ENCODE measurements at regions of chr16 and their contacts with region 1.

Region 1: GRCh38 chr16:80540516-80541272 is at the start of gene DYNLRB2:
- DNase-seq: peak; percentile 82
- H3K4me3 ChIP-seq: peak within 1 kb of the TSS; percentile 63
- H3K27ac ChIP-seq: no peak within 1 kb of the TSS
- H3K4me1 ChIP-seq: peaks cover 3% of the 10 kb centered on the region
- CTCF ChIP-seq: no peak
- total RNA-seq, gene DYNLRB2: not detected in 2 replicates

Region 2: GRCh38 chr16:80488167-80488566 is 52.5 kb before region 1 on chr16:
- CTCF ChIA-PET with region 1: no interaction called
- POLR2A ChIA-PET with region 1: no interaction called
- intact Hi-C with region 1: no loop called
- DNase-seq: no peak
- H3K4me3 ChIP-seq: no peak overlapping the region
- H3K27ac ChIP-seq: no peak overlapping the region
- H3K4me1 ChIP-seq: no peaks in the 10 kb centered on the region
- CTCF ChIP-seq: no peak

Region 3: GRCh38 chr16:80557037-80557436 is 16.3 kb after region 1 on chr16:
- CTCF ChIA-PET with region 1: no interaction called
- POLR2A ChIA-PET with region 1: no interaction called
- intact Hi-C with region 1: no loop called
- DNase-seq: no peak
- H3K4me3 ChIP-seq: no peak overlapping the region
- H3K27ac ChIP-seq: no peak overlapping the region
- H3K4me1 ChIP-seq: no peaks in the 10 kb centered on the region
- CTCF ChIP-seq: no peak

Region 4: GRCh38 chr16:80599466-80599865 is 58.8 kb after region 1 on chr16:
- CTCF ChIA-PET with region 1: no interaction called
- POLR2A ChIA-PET with region 1: no interaction called
- intact Hi-C with region 1: no loop called
- DNase-seq: no peak
- H3K4me3 ChIP-seq: no peak overlapping the region
- H3K27ac ChIP-seq: no peak overlapping the region
- H3K4me1 ChIP-seq: no peaks in the 10 kb centered on the region
- CTCF ChIP-seq: no peak

Region 5: DNA sequence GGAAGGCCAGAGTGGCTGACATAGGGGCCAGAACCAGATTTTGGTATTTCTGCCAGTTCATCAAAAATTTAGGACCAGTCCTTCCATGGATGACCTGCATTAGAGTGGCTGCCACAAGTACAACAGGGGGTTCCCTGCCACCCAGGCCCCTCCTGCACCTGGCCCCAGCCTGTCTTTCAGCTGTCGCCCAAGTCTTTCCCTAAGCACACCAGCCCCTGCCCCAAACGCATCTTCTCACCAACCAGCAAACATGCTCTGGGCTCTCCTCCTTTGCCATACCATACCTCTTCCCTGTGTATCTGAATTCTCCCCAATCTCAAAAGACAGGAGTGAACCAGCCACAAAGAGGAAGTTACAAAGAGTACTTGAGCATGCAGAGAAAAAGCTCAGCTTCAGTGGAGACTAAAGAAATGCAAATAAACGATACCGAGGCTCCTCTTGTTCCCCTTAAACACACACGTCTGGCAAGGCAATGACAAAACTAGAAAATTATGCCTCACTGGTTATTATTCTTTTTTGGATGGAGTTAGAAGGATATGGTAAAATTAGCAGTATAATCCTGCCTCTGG is 130.7 kb after region 1 on chr16:
- CTCF ChIA-PET with region 1: no interaction called
- POLR2A ChIA-PET with region 1: no interaction called
- intact Hi-C with region 1: loop called (anchors 2 kb)
- DNase-seq: peak; percentile 83
- H3K4me3 ChIP-seq: peak overlapping the region; percentile 23
- H3K27ac ChIP-seq: peak overlapping the region; percentile 47
- H3K4me1 ChIP-seq: peaks cover 48% of the 10 kb centered on the region
- CTCF ChIP-seq: no peak

Measured in OCI-LY7 (cell line).